GM10248 (cell line): ENCODE measurements at regions of chr19 and their contacts with region 1.

Region 1: GRCh38 chr19:43765109-43765876 is 10.5 kb upstream of the SMG9 start:
- DNase-seq: peak; percentile 72
- CTCF ChIP-seq: no peak

Region 2: DNA sequence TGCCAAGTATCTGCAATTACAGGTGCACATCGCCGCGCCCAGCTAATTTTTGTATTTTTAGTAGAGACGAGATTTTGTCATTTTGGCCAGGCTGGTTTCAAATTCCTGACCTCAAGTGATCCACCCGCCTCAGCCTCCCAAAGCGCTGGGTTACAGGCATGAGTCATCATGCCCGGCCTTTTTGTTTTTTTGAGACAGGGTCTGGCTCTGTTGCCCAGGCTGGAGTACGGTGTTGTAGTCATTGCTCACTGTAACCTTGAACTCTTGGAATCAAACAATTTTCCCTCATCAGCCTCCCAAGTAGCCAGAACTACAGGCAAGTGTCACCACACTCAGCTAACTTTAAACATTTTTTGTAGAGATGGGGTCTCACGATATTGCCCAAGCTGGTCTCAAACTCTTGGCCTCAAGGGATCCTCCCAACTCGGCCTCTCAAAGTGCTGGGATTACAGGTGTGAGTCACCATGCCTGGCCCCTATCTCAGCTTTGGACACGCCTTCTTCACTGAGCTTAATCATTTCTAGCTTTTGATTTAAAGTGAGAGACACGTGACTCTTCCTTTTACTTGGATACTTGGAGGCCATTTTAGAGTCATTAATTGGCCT is 53.4 kb before region 1 on chr19:
- CTCF ChIA-PET with region 1: no interaction called
- POLR2A ChIA-PET with region 1: no interaction called
- DNase-seq: no peak
- CTCF ChIP-seq: no peak

Region 3: GRCh38 chr19:43754503-43755255 is 10.6 kb before region 1 on chr19 and contains the start of gene SMG9:
- CTCF ChIA-PET with region 1: interaction called, 114 read pairs
- POLR2A ChIA-PET with region 1: interaction called, 38 read pairs
- DNase-seq: peak; percentile 93
- CTCF ChIP-seq: no peak

Region 4: DNA sequence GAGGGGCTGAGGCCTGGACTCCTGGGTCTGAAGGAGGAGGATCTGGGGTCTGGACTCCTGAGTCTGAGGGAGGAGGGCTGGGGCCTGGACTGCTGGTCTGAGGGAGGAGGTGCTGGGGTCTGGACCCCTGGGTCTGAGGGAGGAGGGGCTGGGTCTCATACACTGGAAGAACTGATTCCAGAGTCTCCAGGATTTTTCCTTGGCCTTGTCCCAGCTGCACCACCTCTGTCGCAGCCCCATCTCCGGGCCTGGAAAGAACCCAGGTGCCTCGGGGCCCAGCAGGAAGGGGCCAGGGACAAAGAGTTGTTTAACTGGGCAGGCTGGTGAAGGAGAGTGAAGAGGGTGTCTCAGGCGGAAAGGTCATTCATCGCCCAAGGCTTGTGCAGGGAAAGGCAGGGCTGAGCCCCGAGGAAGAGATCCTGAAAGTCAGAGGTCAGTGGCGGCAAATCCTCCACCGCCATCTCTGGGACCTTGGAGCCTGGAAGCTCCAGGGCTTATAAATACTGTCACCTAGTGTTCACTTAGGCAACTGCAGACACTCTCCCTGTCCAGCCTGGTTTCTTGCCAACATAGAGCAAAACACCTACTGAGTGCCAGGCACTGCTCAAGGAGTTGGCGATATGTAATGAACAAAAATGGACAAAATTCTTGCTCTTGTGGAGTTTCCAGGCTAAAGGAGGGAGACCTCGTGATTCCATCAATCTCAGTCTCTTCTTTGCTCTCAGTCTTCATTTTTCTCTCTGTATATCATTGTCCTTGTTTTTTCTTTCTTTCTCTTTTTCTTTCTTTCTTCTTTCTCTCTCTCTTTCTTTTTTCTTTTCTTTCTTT is 19.9 kb after region 1 on chr19:
- CTCF ChIA-PET with region 1: interaction called, 234 read pairs
- POLR2A ChIA-PET with region 1: no interaction called
- DNase-seq: peak; percentile 71
- CTCF ChIP-seq: peak; percentile 92